ENCODE measurements at regions of chr2 and their contacts with region 1.

Region 1: GRCh38 chr2:38115216-38116032 is 39.5 kb upstream of the CYP1B1 start:
- DNase-seq: peak; percentile 89
- ATAC-seq: peak; percentile 86
- H3K4me3 Mint-ChIP-seq: no peak overlapping the region
- H3K27ac Mint-ChIP-seq: no peak overlapping the region
- H3K4me1 Mint-ChIP-seq: no peaks in the 10 kb centered on the region
- H3K27me3 Mint-ChIP-seq: peaks cover 31% of the 10 kb centered on the region
- CTCF ChIP-seq: peak; percentile 95

Region 2: GRCh38 chr2:38068234-38068633 is 47.2 kb before region 1 on chr2:
- CTCF ChIA-PET with region 1: interaction called, 11 read pairs
- POLR2A ChIA-PET with region 1: no interaction called
- intact Hi-C with region 1: no loop called
- DNase-seq: no peak
- ATAC-seq: no peak
- H3K4me3 Mint-ChIP-seq: no peak overlapping the region
- H3K27ac Mint-ChIP-seq: no peak overlapping the region
- H3K4me1 Mint-ChIP-seq: no peaks in the 10 kb centered on the region
- H3K27me3 Mint-ChIP-seq: peaks cover 14% of the 10 kb centered on the region
- CTCF ChIP-seq: no peak